Heart right ventricle (tissue), 16 donors: ENCODE measurements at regions of chr11 and their contacts with region 1.

Region 1: DNA sequence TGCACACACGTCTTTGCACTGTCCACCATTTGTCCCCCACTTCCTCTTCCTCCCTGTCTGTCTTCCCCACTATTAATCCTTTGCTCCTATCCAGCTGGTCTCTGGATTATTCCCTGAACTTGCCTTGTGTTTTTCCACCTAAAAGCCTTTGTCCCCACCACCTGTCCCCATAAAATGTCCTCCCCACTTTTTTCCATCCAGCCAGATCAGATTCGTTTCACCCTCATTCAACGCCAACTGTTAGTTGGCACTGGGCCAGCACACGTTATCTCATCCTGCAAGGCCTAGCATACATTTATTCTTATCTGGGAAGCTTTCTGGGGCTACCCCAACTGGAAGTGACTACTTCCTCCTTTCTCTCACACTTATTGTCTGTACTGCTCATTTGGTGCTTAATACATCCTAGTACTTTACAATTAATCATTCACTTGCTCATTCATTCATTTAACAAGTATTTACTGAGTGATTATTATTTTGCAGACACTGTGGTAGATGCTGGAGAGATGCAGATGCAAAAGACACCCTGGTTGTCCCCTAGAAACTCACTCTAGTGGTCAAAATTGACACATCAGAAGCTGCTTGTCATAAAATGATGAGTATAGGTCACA is 96.2 kb downstream of the RASSF10 start:
- DNase-seq: peak; percentile 23 to 43
- ATAC-seq: peak; percentile 28 to 74 (median 66)
- H3K4me3 ChIP-seq: no peak overlapping the region
- H3K27ac ChIP-seq: peak overlapping the region in 5 of 10 donors; percentile 7 to 65 (median 52)
- H3K4me1 ChIP-seq: peaks cover 0 to 27% (median 14%) of the 10 kb centered on the region in 9 donors
- H3K27me3 ChIP-seq: peaks cover 0 to 4% (median 0%) of the 10 kb centered on the region in 7 donors
- CTCF ChIP-seq: no peak

Region 2: DNA sequence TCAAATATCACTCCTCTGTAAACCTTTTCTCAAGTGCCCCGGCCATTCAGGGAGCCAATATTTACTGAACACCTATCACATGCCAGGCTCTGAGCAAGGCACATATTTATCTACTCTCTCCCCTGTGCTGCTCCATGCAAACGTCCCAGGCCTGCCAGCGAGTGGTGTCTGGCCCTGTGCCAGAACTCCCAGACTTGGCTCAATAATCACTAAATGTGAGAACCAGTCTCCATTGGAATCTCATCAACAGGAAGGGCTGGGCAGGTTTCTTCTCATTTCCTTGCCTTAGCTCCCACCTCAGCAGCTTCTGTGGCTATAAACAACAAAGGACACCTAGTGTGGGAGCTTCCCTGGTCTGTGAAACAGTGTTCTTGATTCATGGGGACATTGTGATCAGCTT is 74.5 kb before region 1 on chr11:
- intact Hi-C with region 1: loop called in 1 of 10 experiments (anchors 5 kb)
- DNase-seq: peak; percentile 51 to 62
- ATAC-seq: peak; percentile 67 to 79 (median 76)
- H3K4me3 ChIP-seq: no peak overlapping the region
- H3K27ac ChIP-seq: peak overlapping the region in 4 of 10 donors; percentile 0 to 63 (median 35)
- H3K4me1 ChIP-seq: peaks cover 0 to 45% (median 15%) of the 10 kb centered on the region in 9 donors
- H3K27me3 ChIP-seq: peaks cover 0 to 20% (median 12%) of the 10 kb centered on the region in 7 donors
- CTCF ChIP-seq: no peak